ENCODE measurements at regions of chr20 and their contacts with region 1.

Region 1: DNA sequence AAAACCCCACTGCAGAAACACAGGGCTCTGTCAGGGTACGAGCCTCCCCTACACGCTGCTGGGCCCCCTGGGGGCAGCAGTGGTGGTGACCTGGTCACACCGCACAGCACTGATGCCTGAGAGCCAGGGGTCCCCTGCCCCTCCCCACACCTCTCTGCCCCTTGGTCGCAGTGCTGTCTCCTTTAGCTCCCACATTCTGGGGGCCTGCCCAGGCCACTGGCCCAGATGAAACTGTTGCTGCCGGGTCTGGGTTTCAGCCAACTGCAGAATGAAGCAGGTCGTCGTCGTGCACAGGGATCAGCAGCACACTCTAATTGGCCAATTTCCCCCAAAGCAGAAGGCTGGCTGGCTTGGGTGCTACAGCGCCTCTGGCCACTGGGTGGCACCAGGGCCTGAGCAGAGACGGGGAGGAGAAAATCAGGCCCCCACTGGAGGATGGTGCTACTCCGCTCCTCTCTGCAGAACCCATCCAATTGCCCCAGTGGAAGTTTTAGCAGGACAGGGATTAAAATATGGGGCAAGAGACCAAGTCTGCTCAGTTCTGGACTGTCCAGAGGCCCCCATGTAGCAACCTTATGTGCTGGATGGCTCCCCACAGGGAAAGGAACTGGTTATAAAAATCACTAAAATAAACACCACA is 26.1 kb downstream of the DIDO1 start:
- DNase-seq: peak; percentile 74
- ATAC-seq: peak; percentile 86
- H3K4me3 ChIP-seq: no peak overlapping the region
- H3K27ac ChIP-seq: peak overlapping the region; percentile 28
- H3K4me1 ChIP-seq: peaks cover 15% of the 10 kb centered on the region
- H3K27me3 ChIP-seq: no peaks in the 10 kb centered on the region
- CTCF ChIP-seq: peak; percentile 69

Region 2: GRCh38 chr20:62926239-62927104 is 26.3 kb after region 1 on chr20 and contains the start of gene DIDO1:
- CTCF ChIA-PET with region 1: no interaction called
- POLR2A ChIA-PET with region 1: no interaction called
- intact Hi-C with region 1: loop called (anchors 2 kb)
- DNase-seq: peak; percentile 91
- ATAC-seq: peak; percentile 75
- H3K4me3 ChIP-seq: peak within 1 kb of the TSS; percentile 80
- H3K27ac ChIP-seq: peak within 1 kb of the TSS; percentile 78
- H3K4me1 ChIP-seq: peaks cover 27% of the 10 kb centered on the region
- H3K27me3 ChIP-seq: no peaks in the 10 kb centered on the region
- CTCF ChIP-seq: peak; percentile 57
- total RNA-seq, gene DIDO1: 33.2 and 40.4 TPM in 2 replicates

Region 3: DNA sequence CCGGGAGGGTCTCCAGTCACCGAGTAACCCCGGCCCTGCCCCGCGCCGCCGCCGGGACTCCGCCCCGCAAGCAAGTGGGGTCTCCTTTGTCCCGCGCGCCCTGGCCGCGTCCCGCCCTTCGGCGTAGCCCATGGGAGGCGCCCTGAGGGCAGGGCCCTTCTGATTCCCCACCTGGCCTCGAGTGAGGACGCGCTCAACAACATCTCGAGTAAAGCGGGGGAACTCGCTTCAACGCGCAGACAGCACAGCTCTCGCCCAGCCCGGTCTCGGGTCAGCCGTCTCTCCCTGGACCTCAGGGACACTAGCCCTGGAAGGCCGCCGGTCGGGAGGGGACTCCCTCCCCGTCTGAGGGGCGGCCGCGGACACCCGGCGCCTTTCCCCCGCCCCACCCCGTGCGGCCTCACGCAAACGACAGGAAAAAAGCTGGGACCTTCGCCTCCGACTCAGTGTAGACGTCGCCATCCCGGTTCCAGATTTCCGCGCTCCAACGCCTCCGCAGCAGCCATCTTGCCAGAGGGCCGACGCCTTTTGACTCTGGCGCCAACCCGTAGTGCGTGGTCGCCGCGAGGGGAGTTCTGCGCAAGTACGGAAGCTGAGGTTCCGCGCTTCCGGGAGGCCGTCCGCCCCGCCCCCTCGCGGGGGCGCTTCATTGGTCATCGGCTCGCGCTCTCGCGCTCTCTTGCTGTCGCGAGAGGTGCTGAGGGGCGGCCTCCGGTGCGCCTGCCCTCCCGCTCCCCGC is 37.4 kb after region 1 on chr20:
- CTCF ChIA-PET with region 1: interaction called, 9 read pairs
- POLR2A ChIA-PET with region 1: interaction called, 3 read pairs
- intact Hi-C with region 1: loop called (anchors 2 kb)
- DNase-seq: peak; percentile 97
- ATAC-seq: peak; percentile 89
- H3K4me3 ChIP-seq: peak overlapping the region; percentile 99
- H3K27ac ChIP-seq: peak overlapping the region; percentile 84
- H3K4me1 ChIP-seq: peaks cover 26% of the 10 kb centered on the region
- H3K27me3 ChIP-seq: no peaks in the 10 kb centered on the region
- CTCF ChIP-seq: no peak

Region 4: GRCh38 chr20:63009045-63009961 is 109.1 kb after region 1 on chr20:
- CTCF ChIA-PET with region 1: no interaction called
- POLR2A ChIA-PET with region 1: no interaction called
- intact Hi-C with region 1: loop called (anchors 1 kb)
- DNase-seq: peak; percentile 85
- ATAC-seq: peak; percentile 89
- H3K4me3 ChIP-seq: peak overlapping the region; percentile 43; the same call in 1 of the 2 replicates
- H3K27ac ChIP-seq: no peak overlapping the region
- H3K4me1 ChIP-seq: peaks cover 3% of the 10 kb centered on the region; the same call in 1 of the 2 replicates
- H3K27me3 ChIP-seq: peaks cover 70% of the 10 kb centered on the region
- CTCF ChIP-seq: peak; percentile 93

Measured in PC-3 (cell line).